ENCODE measurements at regions of chr14 and their contacts with region 1.

Region 1: DNA sequence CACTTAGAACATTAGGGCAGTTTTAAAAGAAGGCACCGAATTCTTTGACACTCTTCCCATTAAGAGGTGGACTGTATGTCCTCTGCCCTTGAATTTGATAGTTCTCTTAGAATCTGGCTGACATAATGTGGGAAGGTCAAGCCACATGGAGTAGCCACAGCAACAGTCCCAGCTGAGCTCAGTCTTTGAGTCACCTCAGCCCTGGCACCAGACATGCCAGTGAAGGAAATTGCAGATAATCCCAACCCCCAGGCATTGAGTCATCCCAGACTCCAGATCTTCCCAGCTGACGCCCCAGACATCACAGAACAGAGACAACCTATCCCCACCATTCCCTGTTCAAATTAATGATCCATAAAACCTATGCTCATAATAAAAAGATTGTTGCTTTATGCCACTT is 83.4 kb downstream of the GTF2A1 start:
- DNase-seq: no peak
- H3K4me3 ChIP-seq: no peak overlapping the region
- H3K4me3 Mint-ChIP-seq: no peak overlapping the region
- H3K27ac Mint-ChIP-seq: no peak overlapping the region
- H3K4me1 ChIP-seq: no peaks in the 10 kb centered on the region
- H3K4me1 Mint-ChIP-seq: no peaks in the 10 kb centered on the region
- H3K27me3 ChIP-seq: no peaks in the 10 kb centered on the region
- H3K27me3 Mint-ChIP-seq: peaks cover 2% of the 10 kb centered on the region
- CTCF ChIP-seq: no peak

Region 2: GRCh38 chr14:81178063-81178462 is 40.7 kb after region 1 on chr14:
- CTCF ChIA-PET with region 1: no interaction called
- POLR2A ChIA-PET with region 1: no interaction called
- intact Hi-C with region 1: loop called (anchors 1 kb)
- DNase-seq: no peak
- H3K4me3 ChIP-seq: no peak overlapping the region
- H3K4me3 Mint-ChIP-seq: no peak overlapping the region
- H3K27ac Mint-ChIP-seq: no peak overlapping the region
- H3K4me1 ChIP-seq: peaks cover 19% of the 10 kb centered on the region
- H3K4me1 Mint-ChIP-seq: peaks cover 10% of the 10 kb centered on the region
- H3K27me3 ChIP-seq: no peaks in the 10 kb centered on the region
- H3K27me3 Mint-ChIP-seq: no peaks in the 10 kb centered on the region
- CTCF ChIP-seq: no peak

Region 3: DNA sequence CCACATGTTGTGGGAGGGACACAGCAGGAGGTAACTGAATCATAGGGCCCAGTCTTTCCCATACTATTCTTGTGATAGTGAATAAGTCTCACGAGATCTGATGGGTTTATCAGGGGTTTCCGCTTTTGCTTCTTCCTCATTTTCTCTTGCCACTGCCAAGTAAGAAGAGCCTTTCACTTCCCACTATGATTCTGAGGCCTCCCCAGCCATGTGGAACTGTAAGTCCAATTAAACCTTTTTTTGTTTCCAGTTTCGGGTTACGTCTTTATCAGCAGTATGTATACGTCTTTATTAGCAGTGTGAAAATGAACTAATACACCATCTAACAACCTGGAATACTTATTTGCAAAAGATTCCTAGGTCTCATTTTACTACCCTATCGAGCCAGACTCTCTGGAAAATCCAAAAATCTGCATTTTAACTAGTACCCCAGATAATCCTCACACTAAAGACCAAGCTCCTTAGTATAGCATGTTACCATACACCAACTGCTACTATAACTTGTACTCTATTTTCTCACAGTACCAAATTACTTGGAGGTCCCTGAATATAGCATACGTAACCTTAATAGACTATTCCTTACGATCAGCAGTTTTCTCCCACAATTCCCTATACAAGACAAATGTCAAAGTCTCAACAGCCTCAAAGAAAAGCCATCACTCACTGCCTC is 72.0 kb after region 1 on chr14:
- CTCF ChIA-PET with region 1: no interaction called
- POLR2A ChIA-PET with region 1: no interaction called
- intact Hi-C with region 1: no loop called
- DNase-seq: no peak
- H3K4me3 ChIP-seq: no peak overlapping the region
- H3K4me3 Mint-ChIP-seq: no peak overlapping the region
- H3K27ac Mint-ChIP-seq: no peak overlapping the region
- H3K4me1 ChIP-seq: no peaks in the 10 kb centered on the region; the same call in 1 of the 2 replicates
- H3K4me1 Mint-ChIP-seq: no peaks in the 10 kb centered on the region
- H3K27me3 ChIP-seq: no peaks in the 10 kb centered on the region
- H3K27me3 Mint-ChIP-seq: no peaks in the 10 kb centered on the region
- CTCF ChIP-seq: no peak

Region 4: GRCh38 chr14:81234278-81234677 is 97.0 kb after region 1 on chr14:
- CTCF ChIA-PET with region 1: no interaction called
- POLR2A ChIA-PET with region 1: no interaction called
- intact Hi-C with region 1: no loop called
- DNase-seq: no peak
- H3K4me3 ChIP-seq: no peak overlapping the region
- H3K4me3 Mint-ChIP-seq: no peak overlapping the region
- H3K27ac Mint-ChIP-seq: no peak overlapping the region
- H3K4me1 ChIP-seq: no peaks in the 10 kb centered on the region
- H3K4me1 Mint-ChIP-seq: no peaks in the 10 kb centered on the region
- H3K27me3 ChIP-seq: no peaks in the 10 kb centered on the region
- H3K27me3 Mint-ChIP-seq: no peaks in the 10 kb centered on the region
- CTCF ChIP-seq: no peak